Left ventricle myocardium inferior (tissue), 1 donor: ENCODE measurements at regions of chr11 and their contacts with region 1.

Region 1: DNA sequence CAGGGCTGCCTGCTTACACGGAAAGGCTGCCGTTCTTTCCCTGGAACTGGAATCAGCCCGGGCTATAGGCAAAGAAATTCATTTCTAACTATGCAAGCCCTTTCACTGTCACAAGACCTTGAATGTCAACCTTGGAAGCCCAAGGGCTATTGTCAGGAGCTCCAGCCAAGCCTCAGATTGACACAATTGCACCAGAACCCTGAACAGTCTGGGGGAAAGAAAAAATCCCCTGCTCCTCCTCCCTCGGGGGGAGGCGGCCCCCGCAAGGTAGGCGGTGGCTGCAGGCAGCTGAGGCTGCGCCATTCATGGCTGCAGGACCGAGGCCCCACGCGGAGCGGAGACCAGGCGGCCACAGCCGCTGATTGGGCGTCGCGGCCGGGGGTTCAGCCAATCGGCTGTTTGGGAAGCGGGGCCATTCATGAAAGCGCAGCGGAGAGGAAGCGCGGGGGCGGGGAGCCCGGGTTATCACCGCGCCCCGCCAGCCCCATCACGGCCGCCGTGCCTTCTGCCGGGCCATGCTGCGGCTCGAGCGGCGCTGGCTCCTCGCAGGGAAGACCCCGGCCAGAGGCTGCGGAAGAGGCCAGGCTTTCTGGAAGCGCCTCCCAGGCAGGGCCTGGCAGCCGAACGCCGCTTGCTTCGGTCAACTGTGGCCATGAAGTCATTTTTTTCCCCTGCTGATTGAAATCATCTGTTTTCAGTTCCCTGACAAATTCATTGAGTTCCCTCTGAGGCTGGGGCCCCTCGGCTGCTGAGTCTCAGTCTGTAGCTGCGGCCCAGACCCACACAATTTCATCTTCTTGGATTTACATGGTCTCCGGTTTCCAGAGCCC is 38.1 kb upstream of the LINC01488 start:
- DNase-seq: peak; percentile 93
- H3K4me3 ChIP-seq: peak overlapping the region; percentile 65
- H3K27ac ChIP-seq: peak overlapping the region; percentile 96
- H3K4me1 ChIP-seq: peaks cover 45% of the 10 kb centered on the region
- H3K27me3 ChIP-seq: no peaks in the 10 kb centered on the region
- CTCF ChIP-seq: no peak

Region 2: GRCh38 chr11:69296890-69297786 is 146.2 kb before region 1 on chr11:
- intact Hi-C with region 1: loop called (anchors 10 kb)
- DNase-seq: peak; percentile 94
- H3K4me3 ChIP-seq: peak overlapping the region; percentile 45
- H3K27ac ChIP-seq: peak overlapping the region; percentile 93
- H3K4me1 ChIP-seq: peaks cover 87% of the 10 kb centered on the region
- H3K27me3 ChIP-seq: no peaks in the 10 kb centered on the region
- CTCF ChIP-seq: no peak